T-cell (primary cell): ENCODE measurements at regions of chr1 and their contacts with region 1.

Region 1: GRCh38 chr1:94069919-94070285 is 51.0 kb downstream of the ABCA4 start:
- DNase-seq: no peak
- ATAC-seq: no peak
- H3K4me3 ChIP-seq: no peak overlapping the region
- H3K4me3 Mint-ChIP-seq: no peak overlapping the region
- H3K27ac ChIP-seq: no peak overlapping the region
- H3K27ac Mint-ChIP-seq: no peak overlapping the region
- H3K4me1 ChIP-seq: no peaks in the 10 kb centered on the region
- H3K4me1 Mint-ChIP-seq: peaks cover 3 to 16% (median 5%) of the 10 kb centered on the region in 3 donors
- H3K27me3 ChIP-seq: no peaks in the 10 kb centered on the region
- H3K27me3 Mint-ChIP-seq: peaks cover 2 to 3% of the 10 kb centered on the region in 2 donors

Region 2: GRCh38 chr1:94039514-94039870 is 30.4 kb before region 1 on chr1:
- CTCF ChIA-PET with region 1: interaction called in 1 of 2 experiments, 13 read pairs
- POLR2A ChIA-PET with region 1: no interaction called
- DNase-seq: peak in 26 of 35 experiments; percentile 7 to 70 (median 38)
- ATAC-seq: no peak
- H3K4me3 ChIP-seq: no peak overlapping the region
- H3K4me3 Mint-ChIP-seq: no peak overlapping the region
- H3K27ac ChIP-seq: no peak overlapping the region
- H3K27ac Mint-ChIP-seq: no peak overlapping the region
- H3K4me1 ChIP-seq: no peaks in the 10 kb centered on the region
- H3K4me1 Mint-ChIP-seq: peaks cover 0 to 4% (median 2%) of the 10 kb centered on the region in 3 donors
- H3K27me3 ChIP-seq: peaks cover 0 to 16% of the 10 kb centered on the region in 2 experiments
- H3K27me3 Mint-ChIP-seq: peaks cover 50 to 53% of the 10 kb centered on the region in 2 donors